MCF 10A (cell line): ENCODE measurements at regions of chr1 and their contacts with region 1.

Region 1: DNA sequence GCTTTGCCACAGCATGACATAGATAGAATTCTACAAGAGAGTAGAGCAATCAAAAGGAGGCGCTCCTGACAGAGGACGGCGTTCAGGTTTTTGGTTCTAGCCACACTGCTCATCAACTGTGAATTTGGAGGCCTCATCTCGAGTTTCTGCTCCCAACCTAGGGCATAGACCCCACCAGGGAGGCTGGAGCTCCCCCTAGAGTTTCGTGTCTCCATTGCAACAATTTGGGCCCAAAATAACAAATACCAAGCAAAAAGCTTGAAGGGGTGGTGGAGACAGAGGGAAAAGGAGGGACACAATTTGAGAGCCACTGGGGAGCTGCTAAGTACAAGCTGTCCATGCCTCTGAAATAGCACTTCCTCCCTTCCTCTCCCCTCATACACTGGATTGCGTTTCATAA is 297.0 kb downstream of the GPATCH2 start:
- DNase-seq: peak; percentile 79
- H3K4me3 Mint-ChIP-seq: no peak overlapping the region
- H3K27ac Mint-ChIP-seq: no peak overlapping the region
- H3K4me1 Mint-ChIP-seq: no peaks in the 10 kb centered on the region
- H3K27me3 Mint-ChIP-seq: peaks cover 5% of the 10 kb centered on the region
- CTCF ChIP-seq: peak; percentile 91

Region 2: DNA sequence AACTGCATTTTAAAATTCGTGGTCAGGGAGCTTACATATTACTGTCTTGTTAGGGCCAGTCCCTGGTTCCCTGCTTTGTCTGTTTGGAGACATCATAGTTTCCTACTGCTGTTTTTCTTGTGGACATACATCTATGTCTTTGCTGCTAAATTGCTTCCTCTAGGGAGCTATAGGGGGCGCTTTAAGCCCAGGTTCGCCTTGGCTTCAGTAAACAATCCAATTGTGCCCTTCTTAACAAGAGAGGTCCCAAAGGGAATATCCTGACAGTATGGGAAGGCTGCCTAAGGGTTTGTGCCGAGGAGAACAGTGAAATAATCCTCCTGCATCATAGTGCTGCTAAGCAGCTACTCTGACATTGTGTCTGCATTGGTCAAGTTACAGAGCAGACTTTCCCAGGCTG is 1023.2 kb before region 1 on chr1:
- CTCF ChIA-PET with region 1: interaction called, 3 read pairs
- POLR2A ChIA-PET with region 1: no interaction called
- intact Hi-C with region 1: loop called (anchors 1 kb)
- DNase-seq: peak; percentile 75
- H3K4me3 Mint-ChIP-seq: no peak overlapping the region
- H3K27ac Mint-ChIP-seq: no peak overlapping the region
- H3K4me1 Mint-ChIP-seq: no peaks in the 10 kb centered on the region
- H3K27me3 Mint-ChIP-seq: peaks cover 77% of the 10 kb centered on the region
- CTCF ChIP-seq: peak; percentile 95

Region 3: DNA sequence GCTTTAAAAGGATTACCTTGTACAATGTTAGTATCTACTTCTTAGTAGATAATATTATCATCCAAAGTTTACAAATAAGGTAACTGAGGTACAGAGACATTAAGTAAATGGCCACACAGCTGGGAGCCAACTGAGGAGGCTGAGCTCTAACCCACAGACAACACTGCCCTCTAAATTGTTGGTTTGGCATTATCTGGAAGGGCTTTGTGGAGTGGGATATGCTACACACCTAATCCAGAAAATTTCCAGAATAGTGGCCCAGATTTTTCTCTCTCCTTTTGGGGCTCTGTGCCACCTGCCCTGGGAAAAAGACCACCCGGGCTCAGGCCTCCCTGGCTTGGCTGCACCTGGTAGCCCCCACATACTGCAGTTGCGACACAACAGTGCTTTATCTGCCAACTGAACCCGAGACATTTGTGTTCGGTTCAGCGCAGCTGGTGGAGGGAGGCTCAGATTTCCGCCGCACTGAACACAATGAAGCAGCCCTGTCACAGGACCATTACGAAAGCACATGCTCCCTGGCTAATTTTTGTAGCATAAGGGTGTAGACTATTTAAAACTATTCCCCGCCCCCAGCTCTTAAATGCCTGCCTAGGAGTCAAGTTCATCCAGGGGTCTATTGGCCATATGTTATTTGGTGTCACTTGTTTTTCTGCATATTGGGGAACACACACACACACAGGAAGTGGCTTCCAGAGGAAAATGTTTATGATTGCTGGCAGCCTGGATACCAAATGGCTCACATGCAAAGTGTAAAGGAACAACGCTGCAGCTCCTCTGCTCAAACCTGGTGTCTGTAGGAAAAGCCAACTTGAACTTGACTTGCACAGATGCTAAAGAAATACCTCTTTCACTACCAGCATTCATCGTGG is 518.4 kb before region 1 on chr1:
- CTCF ChIA-PET with region 1: no interaction called
- POLR2A ChIA-PET with region 1: no interaction called
- intact Hi-C with region 1: loop called (anchors 10 kb)
- DNase-seq: no peak
- H3K4me3 Mint-ChIP-seq: no peak overlapping the region
- H3K27ac Mint-ChIP-seq: no peak overlapping the region
- H3K4me1 Mint-ChIP-seq: no peaks in the 10 kb centered on the region
- H3K27me3 Mint-ChIP-seq: no peaks in the 10 kb centered on the region
- CTCF ChIP-seq: no peak

Region 4: GRCh38 chr1:216961516-216961915 is 372.4 kb before region 1 on chr1:
- CTCF ChIA-PET with region 1: interaction called, 3 read pairs
- POLR2A ChIA-PET with region 1: no interaction called
- intact Hi-C with region 1: loop called (anchors 5 kb)
- DNase-seq: no peak
- H3K4me3 Mint-ChIP-seq: no peak overlapping the region
- H3K27ac Mint-ChIP-seq: no peak overlapping the region
- H3K4me1 Mint-ChIP-seq: no peaks in the 10 kb centered on the region
- H3K27me3 Mint-ChIP-seq: no peaks in the 10 kb centered on the region
- CTCF ChIP-seq: peak; percentile 5

Region 5: DNA sequence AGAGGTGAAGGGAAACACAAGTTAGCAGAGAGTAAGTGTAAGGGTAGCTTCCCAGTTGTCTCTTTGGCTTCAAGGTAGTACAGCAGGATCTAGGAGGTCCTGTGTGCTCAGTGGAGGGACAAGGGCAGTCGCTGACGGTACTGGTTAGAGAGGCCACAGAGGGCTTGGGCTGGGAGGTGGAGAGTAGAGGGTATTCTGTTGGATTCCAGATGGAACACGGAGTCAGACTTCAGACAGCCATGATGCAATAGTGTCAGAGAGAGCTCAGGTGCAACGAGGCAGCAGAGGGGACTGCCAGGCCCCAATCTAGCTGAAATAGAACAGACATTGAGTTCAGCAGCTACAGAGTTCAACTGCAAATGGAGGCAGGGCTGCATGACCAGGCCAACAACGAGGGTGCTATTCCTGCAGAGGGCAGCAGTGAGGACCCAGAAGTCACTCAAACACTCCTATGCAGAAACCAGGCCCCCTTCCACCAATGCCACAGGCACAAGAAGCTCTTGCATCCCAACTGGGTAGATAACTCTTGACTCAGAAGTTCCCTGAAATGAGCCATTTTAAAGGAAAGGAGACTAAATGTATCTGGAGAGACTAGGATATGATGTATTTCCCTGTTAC is 285.7 kb before region 1 on chr1:
- CTCF ChIA-PET with region 1: interaction called, 3 read pairs
- POLR2A ChIA-PET with region 1: no interaction called
- intact Hi-C with region 1: loop called (anchors 1 kb)
- DNase-seq: peak; percentile 41
- H3K4me3 Mint-ChIP-seq: no peak overlapping the region
- H3K27ac Mint-ChIP-seq: no peak overlapping the region
- H3K4me1 Mint-ChIP-seq: no peaks in the 10 kb centered on the region
- H3K27me3 Mint-ChIP-seq: no peaks in the 10 kb centered on the region
- CTCF ChIP-seq: peak; percentile 19